Activated naive CD4-positive, alpha-beta T cell treated with anti-CD3 and anti-CD28 coated beads for 36 hours (primary cell): ENCODE measurements at regions of chr11 and their contacts with region 1.

Region 1: GRCh38 chr11:110199184-110199941 is 97.1 kb downstream of the RDX start:
- DNase-seq: no peak
- H3K4me3 Mint-ChIP-seq: no peak overlapping the region
- H3K27ac Mint-ChIP-seq: no peak overlapping the region
- H3K4me1 Mint-ChIP-seq: no peaks in the 10 kb centered on the region
- H3K27me3 Mint-ChIP-seq: no peaks in the 10 kb centered on the region

Region 2: GRCh38 chr11:108616567-108616966 is 1582.8 kb before region 1 on chr11:
- CTCF ChIA-PET with region 1: no interaction called
- intact Hi-C with region 1: no loop called
- DNase-seq: no peak
- H3K4me3 Mint-ChIP-seq: no peak overlapping the region
- H3K27ac Mint-ChIP-seq: no peak overlapping the region
- H3K4me1 Mint-ChIP-seq: peaks cover 9% of the 10 kb centered on the region
- H3K27me3 Mint-ChIP-seq: peaks cover 5% of the 10 kb centered on the region

Region 3: DNA sequence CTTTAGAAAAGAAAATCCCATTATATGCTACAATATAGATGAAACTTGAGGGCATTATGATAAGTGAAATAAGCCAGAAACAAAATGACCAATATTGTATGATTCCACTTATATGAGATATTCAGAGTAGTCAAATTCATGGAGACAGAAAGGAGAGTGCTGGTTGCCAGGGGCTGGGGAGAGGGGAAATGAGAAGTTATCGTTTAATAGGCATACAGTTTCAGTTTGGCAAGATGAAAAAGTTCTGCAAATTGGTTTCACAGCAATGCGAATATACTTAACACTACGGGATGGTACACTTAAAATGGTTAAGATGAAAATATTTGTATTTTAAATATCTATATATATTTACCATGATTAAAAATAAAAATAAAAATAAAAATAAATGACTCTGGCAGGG is 128.1 kb after region 1 on chr11:
- CTCF ChIA-PET with region 1: no interaction called
- intact Hi-C with region 1: no loop called
- DNase-seq: no peak
- H3K4me3 Mint-ChIP-seq: peak overlapping the region; percentile 81
- H3K27ac Mint-ChIP-seq: peak overlapping the region; percentile 65
- H3K4me1 Mint-ChIP-seq: peaks cover 18% of the 10 kb centered on the region
- H3K27me3 Mint-ChIP-seq: peaks cover under 1% of the 10 kb centered on the region

Region 4: DNA sequence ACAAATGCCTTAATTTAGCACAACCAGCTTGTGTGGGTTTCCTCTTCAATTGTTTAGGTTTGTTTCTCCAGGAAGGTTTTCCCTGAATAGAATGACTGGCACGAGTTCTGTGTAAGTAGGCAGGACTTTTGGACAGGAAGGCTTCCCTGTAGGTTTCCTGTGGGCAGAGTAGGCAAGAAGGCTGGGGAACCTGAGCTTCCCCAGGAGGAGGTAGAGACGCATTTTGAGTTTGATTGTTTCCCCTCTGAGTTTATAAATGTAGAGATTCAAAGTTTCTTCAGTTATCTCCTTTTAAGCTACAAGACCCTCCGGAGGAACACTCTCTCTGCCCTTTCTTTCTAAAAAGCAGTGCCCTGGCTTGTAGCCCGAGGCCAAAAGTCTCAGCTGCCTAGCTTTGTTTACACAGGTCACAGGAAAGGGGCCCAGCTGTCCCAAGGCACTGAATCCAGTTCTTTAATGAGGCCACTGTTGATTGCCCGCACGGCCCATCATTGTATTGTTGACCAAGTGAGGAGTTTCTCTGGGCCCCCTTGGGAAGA is 163.7 kb after region 1 on chr11:
- CTCF ChIA-PET with region 1: interaction called, 89 read pairs
- intact Hi-C with region 1: loop called (anchors 1 kb)
- DNase-seq: no peak
- H3K4me3 Mint-ChIP-seq: no peak overlapping the region
- H3K27ac Mint-ChIP-seq: no peak overlapping the region
- H3K4me1 Mint-ChIP-seq: peaks cover 8% of the 10 kb centered on the region
- H3K27me3 Mint-ChIP-seq: peaks cover 3% of the 10 kb centered on the region